ENCODE measurements at regions of chr11 and their contacts with region 1.

Region 1: GRCh38 chr11:1763796-1764661 is at the start of gene CTSD:
- DNase-seq: peak; percentile 76
- H3K4me3 Mint-ChIP-seq: peak within 1 kb of the TSS; percentile 77
- H3K27ac Mint-ChIP-seq: peak within 1 kb of the TSS; percentile 39
- H3K4me1 Mint-ChIP-seq: peaks cover 10% of the 10 kb centered on the region
- H3K27me3 Mint-ChIP-seq: no peaks in the 10 kb centered on the region
- CTCF ChIP-seq: no peak
- total RNA-seq, gene CTSD: 366 and 367 TPM in 2 replicates

Region 2: DNA sequence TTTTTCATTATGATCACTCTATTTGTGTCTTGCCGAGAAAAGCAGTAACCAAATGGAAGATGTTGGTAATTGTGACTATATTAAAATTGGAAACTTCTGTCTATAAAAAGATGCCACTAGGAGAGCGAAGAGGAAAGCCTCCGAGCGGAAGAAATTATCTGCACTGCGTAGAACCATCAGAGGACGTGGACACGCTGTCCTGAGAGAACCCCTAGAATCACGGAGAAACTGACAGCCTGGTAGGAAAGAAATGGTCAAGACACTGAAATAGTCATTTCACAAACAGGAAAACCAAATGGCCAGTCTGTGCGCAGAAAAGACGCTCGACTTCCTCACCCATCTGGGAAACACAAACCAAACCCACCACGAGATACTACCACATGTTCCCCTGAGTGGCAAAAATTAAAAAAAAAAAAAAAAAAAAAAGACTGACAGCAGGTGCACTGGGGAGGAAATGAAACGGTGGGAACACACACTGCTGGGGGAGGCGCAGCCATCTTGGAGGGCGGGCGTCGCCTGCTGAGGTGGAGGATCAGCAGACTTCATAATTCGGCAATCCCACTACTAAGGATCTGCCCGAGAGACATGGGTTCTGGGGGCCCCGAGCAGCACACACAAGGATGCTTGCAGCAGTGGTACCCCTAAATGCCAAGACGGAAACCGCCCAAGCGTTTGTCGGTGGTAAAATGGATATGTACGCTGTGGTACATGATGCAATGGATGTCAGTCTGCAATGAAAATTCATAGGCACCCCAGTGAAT is 34.9 kb before region 1 on chr11:
- CTCF ChIA-PET with region 1: no interaction called
- POLR2A ChIA-PET with region 1: no interaction called
- intact Hi-C with region 1: no loop called
- DNase-seq: no peak
- H3K4me3 Mint-ChIP-seq: no peak overlapping the region
- H3K27ac Mint-ChIP-seq: no peak overlapping the region
- H3K4me1 Mint-ChIP-seq: peaks cover 6% of the 10 kb centered on the region
- H3K27me3 Mint-ChIP-seq: peaks cover 78% of the 10 kb centered on the region
- CTCF ChIP-seq: no peak

Region 3: GRCh38 chr11:1749414-1750312 is 14.4 kb before region 1 on chr11:
- CTCF ChIA-PET with region 1: interaction called, 3 read pairs
- POLR2A ChIA-PET with region 1: interaction called, 29 read pairs
- intact Hi-C with region 1: no loop called
- DNase-seq: peak; percentile 72
- H3K4me3 Mint-ChIP-seq: peak overlapping the region; percentile 73
- H3K27ac Mint-ChIP-seq: peak overlapping the region; percentile 74
- H3K4me1 Mint-ChIP-seq: peaks cover 20% of the 10 kb centered on the region
- H3K27me3 Mint-ChIP-seq: no peaks in the 10 kb centered on the region
- CTCF ChIP-seq: no peak

Region 4: DNA sequence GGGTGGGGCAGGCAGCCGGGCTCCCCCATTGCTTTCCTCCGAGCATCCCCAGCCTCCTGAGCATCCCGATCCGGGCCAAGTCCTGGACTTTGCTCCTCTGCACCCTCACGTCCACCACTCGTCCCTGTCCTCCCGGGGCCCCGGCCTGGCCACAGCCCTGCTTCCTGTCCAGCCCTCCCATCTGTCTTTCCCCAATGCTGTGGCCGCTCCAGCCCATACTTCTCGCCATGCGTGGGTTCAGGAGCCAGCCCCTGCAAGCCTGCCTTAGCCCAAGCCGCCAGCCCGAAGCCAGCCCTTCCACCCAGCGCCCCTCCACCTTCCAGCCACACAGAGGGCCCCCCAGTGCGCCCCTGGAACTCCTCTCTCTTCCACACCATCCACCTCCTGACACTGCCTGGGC is 206.9 kb after region 1 on chr11:
- CTCF ChIA-PET with region 1: no interaction called
- POLR2A ChIA-PET with region 1: no interaction called
- intact Hi-C with region 1: no loop called
- DNase-seq: no peak
- H3K4me3 Mint-ChIP-seq: no peak overlapping the region
- H3K27ac Mint-ChIP-seq: no peak overlapping the region
- H3K4me1 Mint-ChIP-seq: no peaks in the 10 kb centered on the region
- H3K27me3 Mint-ChIP-seq: no peaks in the 10 kb centered on the region
- CTCF ChIP-seq: no peak

Measured in MCF 10A (cell line).